Posterior cingulate gyrus (tissue), 11 donors: ENCODE measurements at regions of chr9 and their contacts with region 1.

Region 1: DNA sequence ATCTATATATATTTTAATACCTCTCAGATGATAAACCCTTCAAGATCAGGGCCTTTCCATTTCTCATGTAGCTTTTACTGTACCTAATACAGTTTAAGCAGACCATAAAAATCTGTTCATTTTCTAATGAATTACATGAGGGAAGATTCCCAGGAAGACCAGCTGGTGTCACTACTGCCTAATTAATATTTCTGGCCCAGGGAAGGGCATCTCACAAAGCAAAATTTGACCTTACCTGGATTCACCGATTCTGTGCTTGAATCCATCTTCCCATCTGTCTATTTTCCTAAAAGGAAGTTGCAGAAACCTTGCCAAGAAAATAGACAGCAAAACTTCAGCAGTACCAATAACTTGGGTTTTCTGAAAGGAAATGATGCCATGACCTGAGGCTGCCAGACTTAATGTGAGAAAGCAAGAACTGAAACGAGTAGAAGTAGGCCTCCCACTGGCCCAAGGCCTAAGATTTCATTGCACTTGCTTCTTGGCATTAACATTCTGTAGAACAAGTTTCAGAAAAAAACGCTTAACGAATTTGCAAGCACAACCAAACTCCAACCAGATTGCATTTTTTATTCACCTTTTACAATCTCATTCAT is 83.0 kb upstream of the GLIS3 start:
- DNase-seq: no peak

Region 2: GRCh38 chr9:4027606-4028005 is 355.2 kb before region 1 on chr9:
- intact Hi-C with region 1: no loop called
- DNase-seq: no peak

Region 3: DNA sequence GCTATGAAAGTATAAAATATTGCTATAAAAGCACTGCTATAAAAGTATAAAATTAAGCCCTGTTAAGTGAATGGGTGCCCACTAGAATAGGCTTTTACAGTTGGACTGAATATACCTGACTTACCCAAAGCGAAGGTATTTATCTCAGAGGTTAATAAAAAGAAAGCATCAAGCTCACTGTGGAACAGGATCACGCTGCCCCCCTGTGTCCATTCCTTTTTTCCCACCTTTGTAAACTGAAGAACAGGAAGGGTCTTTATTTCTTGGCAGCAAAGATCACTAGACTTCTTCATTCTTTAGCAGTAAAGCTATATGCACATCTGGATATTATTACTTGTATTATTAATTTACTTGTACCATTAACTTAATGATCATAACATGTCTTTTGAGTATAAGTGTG is 257.2 kb after region 1 on chr9:
- intact Hi-C with region 1: loop called (anchors 5 kb)
- DNase-seq: peak in 1 of 10 donors; percentile 72

Region 4: DNA sequence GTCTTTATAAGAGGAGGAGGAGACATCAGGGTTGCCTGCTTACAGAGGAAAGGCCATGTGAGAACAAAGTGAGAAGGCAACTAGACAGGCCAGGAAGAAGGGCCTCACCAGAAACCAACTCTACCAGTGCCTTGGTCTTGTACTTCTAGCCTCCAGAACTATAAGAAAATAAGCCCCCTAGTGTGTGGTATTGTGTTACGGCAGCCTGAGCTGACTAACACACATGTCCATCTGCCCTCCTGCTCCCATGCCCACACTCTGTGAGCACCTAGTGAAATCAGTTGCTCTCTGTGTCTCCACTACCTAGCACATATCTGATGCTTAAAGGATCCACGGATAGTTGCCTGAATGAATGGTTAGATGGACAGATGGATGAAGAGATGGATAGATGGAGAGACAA is 351.3 kb after region 1 on chr9:
- intact Hi-C with region 1: no loop called
- DNase-seq: no peak